GM10248 (cell line): ENCODE measurements at regions of chr17 and their contacts with region 1.

Region 1: DNA sequence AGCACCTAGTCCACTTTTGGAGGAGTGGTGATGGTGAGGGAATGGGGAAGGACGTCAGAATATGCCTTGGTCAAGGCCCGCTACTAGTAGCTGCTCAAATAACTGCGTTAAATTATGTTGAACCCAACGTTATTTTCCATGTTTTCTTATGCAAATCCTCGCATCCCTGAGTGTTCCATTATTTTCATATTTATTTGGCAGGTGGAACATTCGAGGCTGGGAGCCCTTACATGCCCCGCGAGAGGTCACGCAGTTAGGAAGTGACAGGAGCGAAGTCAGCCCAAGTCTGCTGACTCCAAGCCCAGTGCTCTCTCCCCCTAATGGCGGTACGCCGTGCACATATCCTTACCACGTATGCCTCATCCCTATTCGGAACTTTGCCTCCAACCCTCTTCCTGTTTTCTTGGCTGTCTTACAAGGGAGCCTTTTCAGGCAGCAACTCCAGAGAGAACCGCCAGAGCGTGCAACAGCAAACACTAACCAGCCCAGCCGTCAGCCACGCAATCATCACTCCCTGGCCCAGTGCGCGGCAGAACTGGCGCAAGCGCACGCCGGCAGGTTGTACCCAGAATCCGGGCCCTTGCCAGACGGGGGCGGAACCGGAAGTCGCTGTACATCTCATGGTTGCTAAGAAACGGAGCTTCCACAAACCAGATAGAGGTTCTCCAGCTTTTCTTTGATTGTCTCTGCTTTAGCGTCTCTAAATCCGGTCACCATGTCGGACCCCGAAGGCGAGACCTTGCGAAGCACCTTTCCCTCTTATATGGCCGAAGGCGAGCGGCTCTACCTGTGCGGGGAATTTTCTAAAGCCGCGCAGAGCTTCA is at the start of gene ODAD4:
- DNase-seq: peak; percentile 96
- CTCF ChIP-seq: no peak

Region 2: DNA sequence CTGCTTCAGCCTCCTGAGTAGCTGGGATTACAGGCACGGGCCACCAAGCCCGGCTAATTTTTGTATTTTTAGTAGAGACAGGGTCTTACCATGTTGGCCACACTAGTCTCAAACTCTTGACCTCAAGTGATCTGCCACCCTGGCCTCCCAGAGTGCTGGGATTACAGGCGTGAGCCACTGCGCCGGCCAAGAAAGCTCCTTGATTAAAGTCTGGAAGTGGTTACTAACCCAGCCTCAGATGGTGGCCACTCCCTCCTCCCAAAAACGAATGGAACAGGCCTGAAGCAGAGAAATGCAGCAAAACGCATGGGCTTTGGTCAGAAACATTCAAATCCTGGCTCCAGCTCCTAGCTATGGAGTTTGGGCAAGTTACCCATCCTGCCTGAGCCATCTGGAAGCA is 106.1 kb before region 1 on chr17:
- CTCF ChIA-PET with region 1: no interaction called
- POLR2A ChIA-PET with region 1: no interaction called
- DNase-seq: no peak
- CTCF ChIP-seq: no peak

Region 3: GRCh38 chr17:41918314-41919164 is 11.7 kb before region 1 on chr17 and contains the start of gene ACLY:
- CTCF ChIA-PET with region 1: interaction called, 13 read pairs
- POLR2A ChIA-PET with region 1: interaction called, 9 read pairs
- DNase-seq: peak; percentile 100
- CTCF ChIP-seq: no peak

Region 4: DNA sequence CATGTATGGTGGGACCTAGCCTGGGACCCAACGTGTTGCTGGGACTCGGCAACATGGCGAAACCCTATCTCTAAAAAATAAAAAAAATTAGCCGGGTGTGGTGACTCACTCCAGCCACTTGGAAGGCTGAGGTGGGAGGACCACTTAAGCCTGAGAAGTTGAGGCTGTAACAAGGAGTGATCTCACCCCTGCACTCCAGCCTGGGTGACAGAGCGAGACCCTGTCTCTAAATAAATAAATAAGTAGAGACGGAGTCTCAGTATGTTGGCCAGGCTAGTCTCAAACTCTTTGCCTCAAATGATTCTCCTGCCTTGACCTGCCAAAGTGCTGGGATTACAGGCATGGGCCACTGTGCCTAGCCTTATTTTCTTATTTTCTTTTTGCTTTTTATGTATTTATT is 26.3 kb after region 1 on chr17:
- CTCF ChIA-PET with region 1: no interaction called
- POLR2A ChIA-PET with region 1: no interaction called
- DNase-seq: no peak
- CTCF ChIP-seq: no peak

Region 5: DNA sequence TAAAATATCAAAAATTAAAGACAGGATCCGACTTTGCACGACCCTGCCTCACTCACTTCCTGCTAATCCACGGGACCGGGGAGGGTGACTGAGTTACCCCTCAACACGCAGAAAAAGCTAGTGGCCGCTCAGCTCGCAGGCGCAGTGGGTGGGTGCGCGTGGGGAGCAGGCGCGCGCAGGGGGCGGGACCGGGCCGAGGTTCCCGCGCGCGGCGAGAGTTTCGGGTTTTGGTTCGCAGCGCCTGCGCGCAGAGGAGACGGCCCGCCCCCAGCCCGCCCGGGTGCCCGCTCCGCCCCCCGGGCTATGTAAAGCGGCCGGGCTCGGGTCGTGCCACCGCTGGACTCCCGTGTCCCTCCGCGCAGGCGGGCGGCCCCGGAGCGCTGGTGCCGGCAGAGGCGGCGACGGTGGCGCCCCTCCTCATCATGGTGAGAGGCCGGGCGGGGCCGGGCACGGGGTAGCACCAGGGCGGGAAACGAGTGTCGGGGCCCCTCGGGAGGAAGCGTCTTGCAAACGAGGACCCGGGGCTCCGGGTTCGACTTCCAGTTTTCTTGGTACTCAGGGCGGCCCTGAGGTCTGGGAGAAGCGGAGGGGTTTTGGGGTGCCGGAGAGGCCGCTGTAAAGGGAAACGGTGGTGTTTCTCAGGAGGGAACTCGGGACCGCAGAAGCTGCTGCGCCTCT is 36.4 kb after region 1 on chr17 and contains the start of gene CNP:
- CTCF ChIA-PET with region 1: interaction called, 5 read pairs
- POLR2A ChIA-PET with region 1: interaction called, 14 read pairs
- DNase-seq: peak; percentile 97
- CTCF ChIP-seq: no peak

Region 6: GRCh38 chr17:42112552-42113176 is 182.4 kb after region 1 on chr17 and contains the start of gene DHX58:
- CTCF ChIA-PET with region 1: no interaction called
- POLR2A ChIA-PET with region 1: no interaction called
- DNase-seq: peak; percentile 93
- CTCF ChIP-seq: no peak